Endothelial cell of umbilical vein (primary cell): ENCODE measurements at regions of chr16 and their contacts with region 1.

Region 1: DNA sequence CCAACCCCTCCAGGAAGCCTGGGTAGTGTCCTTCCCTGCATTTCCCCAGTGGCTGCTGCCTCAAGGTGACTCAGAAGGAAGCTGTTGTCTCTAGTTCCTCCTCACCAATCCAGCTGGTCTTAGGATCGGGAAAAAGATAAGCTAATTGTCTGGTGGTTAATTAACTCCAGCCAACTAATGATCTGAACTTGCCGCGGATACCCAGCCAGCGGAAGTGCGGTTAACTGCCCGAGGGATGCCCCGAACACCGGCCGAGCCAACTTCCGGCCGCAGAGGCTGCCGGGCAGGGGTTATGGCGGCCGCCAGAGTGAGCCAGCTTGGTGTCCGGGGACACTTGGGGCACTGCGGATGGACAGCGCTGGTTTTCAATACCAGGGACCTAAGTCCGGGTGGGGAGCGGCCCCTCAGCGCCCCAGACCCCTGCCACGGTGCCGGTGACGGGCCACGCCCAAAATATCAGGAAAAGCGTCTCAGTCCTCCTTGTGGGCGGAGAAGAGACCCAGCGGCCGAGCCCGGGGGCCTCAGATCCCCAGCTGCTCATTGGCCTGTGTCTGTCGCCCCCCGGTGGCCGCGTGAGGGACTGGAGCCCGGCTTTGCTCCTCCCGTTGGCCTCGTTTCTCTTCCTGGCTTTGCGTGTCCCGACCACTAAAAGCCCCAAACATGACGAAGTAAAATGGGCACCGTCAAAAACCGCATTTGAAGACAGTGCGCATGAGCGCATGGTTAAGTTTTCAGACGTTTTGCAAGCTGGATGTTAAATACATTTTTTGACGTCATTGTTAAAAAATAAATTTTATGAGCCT is 10.2 kb upstream of the PRSS22 start:
- DNase-seq: peak; percentile 93
- H3K4me3 ChIP-seq: peak overlapping the region in 2 of 3 experiments; percentile 34 to 45
- H3K27ac ChIP-seq: peak overlapping the region; percentile 81
- H3K4me1 ChIP-seq: peaks cover 5% of the 10 kb centered on the region
- H3K27me3 ChIP-seq: peaks cover 0 to 2% of the 10 kb centered on the region in 2 experiments
- CTCF ChIP-seq: peak; percentile 99
- POLR2A ChIP-seq: peak; percentile 76

Region 2: DNA sequence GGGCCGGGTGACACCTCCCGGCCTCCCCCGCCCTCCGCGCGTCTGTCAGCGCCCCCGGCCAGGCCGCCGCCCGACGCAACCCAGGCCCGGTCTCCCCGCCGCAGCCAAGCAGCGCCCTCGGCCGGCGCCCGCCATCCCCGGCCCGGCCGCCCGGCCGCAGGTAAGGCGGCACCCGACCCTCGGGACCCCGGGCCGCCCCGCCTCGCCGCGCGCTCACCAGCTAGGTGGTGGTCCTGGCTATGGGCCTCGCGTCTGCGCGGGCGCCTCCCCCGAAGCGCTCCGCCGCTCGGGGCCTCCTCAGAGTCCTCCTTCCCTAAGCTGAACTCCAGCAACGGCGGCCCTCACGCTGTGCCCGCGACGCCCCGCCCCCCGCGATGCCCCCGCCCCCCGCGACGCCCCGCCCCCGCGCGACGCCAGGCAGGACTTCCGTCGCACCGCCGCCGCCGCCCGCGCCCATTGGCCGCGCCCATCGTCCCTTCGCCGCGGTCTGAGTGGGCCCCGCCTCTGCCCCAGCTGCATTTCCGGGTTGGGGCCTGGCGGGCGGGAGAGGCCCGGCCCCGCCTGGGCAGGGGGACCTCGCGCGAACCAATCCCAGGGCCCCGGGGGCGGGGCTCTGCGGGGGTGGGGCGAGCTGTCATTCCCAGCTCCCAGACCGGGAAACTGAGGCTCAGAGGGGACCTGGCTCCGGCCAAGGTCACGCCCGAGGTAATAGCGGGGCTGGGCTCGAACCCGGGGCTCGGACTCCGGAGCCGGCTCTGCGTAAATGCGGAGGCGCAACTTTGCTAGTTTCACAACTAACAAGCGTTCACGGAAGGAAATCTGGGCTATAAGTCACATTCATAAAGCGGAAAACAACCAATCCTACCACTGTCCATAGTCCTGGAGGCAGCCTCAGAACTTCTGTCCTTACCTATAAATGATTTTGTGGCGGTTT is 194.9 kb before region 1 on chr16:
- CTCF ChIA-PET with region 1: no interaction called
- POLR2A ChIA-PET with region 1: no interaction called
- dilution Hi-C with region 1: no loop called
- intact Hi-C with region 1: loop called (anchors 2 kb)
- DNase-seq: peak; percentile 95
- H3K4me3 ChIP-seq: peak overlapping the region; percentile 61 to 92 (median 89)
- H3K27ac ChIP-seq: peak overlapping the region; percentile 14
- H3K4me1 ChIP-seq: peaks cover 7% of the 10 kb centered on the region
- H3K27me3 ChIP-seq: no peaks in the 10 kb centered on the region
- CTCF ChIP-seq: no peak
- POLR2A ChIP-seq: no peak

Region 3: GRCh38 chr16:2777231-2777902 is 90.8 kb before region 1 on chr16 and contains the start of gene ELOB:
- CTCF ChIA-PET with region 1: interaction called, 20 read pairs
- POLR2A ChIA-PET with region 1: no interaction called
- dilution Hi-C with region 1: no loop called
- intact Hi-C with region 1: loop called (anchors 1 kb)
- DNase-seq: peak; percentile 85
- H3K4me3 ChIP-seq: peak within 1 kb of the TSS; percentile 41 to 96 (median 65)
- H3K27ac ChIP-seq: peak within 1 kb of the TSS; percentile 80
- H3K4me1 ChIP-seq: peaks cover 8% of the 10 kb centered on the region
- H3K27me3 ChIP-seq: no peaks in the 10 kb centered on the region
- CTCF ChIP-seq: no peak
- POLR2A ChIP-seq: peak; percentile 82
- total RNA-seq, gene ELOB: 158 and 251 TPM in 2 replicates

Region 4: DNA sequence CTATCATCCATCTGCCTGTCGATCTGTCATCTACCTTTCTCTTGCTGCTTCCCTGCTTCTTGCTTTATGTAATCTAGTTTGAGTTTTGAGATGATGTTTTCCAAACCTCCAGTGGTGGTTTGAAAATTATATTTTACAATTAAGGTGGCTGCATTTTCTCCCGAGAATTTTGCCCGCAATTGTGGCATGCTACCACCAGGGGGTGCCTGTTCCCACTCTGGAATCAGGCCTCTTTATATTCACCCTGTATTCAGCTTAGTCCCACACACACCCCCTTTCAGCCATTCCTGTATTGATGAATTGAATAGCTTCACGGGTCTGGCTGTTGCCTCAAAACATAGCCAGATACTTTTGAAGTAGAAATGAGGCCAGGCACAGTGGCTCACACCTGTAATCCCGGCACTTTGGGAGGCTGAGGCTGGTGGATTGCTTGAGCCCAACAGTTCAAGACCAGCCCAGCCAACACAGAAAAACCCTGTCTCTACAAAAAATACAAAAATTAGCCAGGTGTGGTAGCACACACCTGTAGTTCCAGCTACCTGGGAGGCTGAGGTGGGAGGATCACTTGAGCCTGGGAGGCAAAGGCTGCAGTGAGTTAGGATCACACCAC is 13.4 kb before region 1 on chr16:
- CTCF ChIA-PET with region 1: interaction called, 15 read pairs
- POLR2A ChIA-PET with region 1: no interaction called
- dilution Hi-C with region 1: no loop called
- intact Hi-C with region 1: loop called (anchors 1 kb)
- DNase-seq: no peak
- H3K4me3 ChIP-seq: no peak overlapping the region
- H3K27ac ChIP-seq: no peak overlapping the region
- H3K4me1 ChIP-seq: no peaks in the 10 kb centered on the region
- H3K27me3 ChIP-seq: peaks cover 2 to 7% of the 10 kb centered on the region in 2 experiments
- CTCF ChIP-seq: peak; percentile 36 to 62
- POLR2A ChIP-seq: no peak

Region 5: DNA sequence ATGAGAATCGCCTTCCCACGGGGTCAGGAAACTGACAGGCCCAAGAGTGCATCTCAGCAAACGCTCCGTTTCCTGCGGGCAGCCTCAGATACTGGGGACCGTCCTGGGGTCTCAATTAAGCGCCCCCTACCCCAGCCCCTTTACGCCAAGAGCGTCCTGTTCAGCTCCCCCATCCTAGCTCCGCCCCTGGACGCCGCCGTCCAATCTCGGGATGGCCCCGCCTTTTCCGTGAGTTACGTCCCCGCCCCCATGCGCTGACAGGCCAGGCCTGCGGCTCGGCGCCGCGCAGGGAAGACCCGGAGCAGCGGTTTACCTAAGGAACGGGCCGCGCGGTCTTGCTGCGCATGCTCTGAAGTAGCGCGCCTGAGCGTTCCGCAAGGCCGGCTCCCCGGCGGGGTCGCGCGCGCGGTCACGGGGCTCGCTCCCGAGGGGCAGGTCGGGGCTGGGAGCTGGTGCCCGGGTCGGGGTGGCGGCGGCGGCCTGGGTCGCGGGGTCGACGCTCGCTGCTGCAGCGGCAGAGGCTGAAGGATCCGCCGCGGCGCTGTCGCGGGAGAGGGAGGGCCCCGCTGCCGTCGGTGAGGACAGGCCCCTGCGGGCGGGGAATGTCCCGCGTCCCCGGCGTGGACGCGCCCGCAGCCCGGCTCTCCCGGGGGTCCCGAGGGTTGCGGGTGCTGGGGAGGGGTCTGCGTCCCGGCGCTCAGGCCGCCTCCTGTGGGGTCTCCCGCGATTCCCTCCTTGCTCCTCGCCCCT is 43.6 kb after region 1 on chr16 and contains the start of gene FLYWCH1:
- CTCF ChIA-PET with region 1: interaction called, 18 read pairs
- POLR2A ChIA-PET with region 1: no interaction called
- dilution Hi-C with region 1: no loop called
- intact Hi-C with region 1: no loop called
- DNase-seq: peak; percentile 98
- H3K4me3 ChIP-seq: peak within 1 kb of the TSS; percentile 84 to 96 (median 89)
- H3K27ac ChIP-seq: peak within 1 kb of the TSS; percentile 70
- H3K4me1 ChIP-seq: peaks cover 23% of the 10 kb centered on the region
- H3K27me3 ChIP-seq: no peaks in the 10 kb centered on the region
- CTCF ChIP-seq: no peak
- POLR2A ChIP-seq: no peak
- total RNA-seq, gene FLYWCH1: 51.2 and 51.7 TPM in 2 replicates

Region 6: GRCh38 chr16:2926650-2927646 is 58.8 kb after region 1 on chr16:
- CTCF ChIA-PET with region 1: interaction called, 22 read pairs
- POLR2A ChIA-PET with region 1: no interaction called
- dilution Hi-C with region 1: no loop called
- intact Hi-C with region 1: no loop called
- DNase-seq: peak; percentile 81
- H3K4me3 ChIP-seq: peak overlapping the region in 1 of 3 experiments; percentile 7
- H3K27ac ChIP-seq: no peak overlapping the region
- H3K4me1 ChIP-seq: peaks cover 2% of the 10 kb centered on the region
- H3K27me3 ChIP-seq: no peaks in the 10 kb centered on the region
- CTCF ChIP-seq: peak; percentile 83 to 94
- POLR2A ChIP-seq: no peak